ENCODE measurements at regions of chr1 and their contacts with region 1.

Region 1: DNA sequence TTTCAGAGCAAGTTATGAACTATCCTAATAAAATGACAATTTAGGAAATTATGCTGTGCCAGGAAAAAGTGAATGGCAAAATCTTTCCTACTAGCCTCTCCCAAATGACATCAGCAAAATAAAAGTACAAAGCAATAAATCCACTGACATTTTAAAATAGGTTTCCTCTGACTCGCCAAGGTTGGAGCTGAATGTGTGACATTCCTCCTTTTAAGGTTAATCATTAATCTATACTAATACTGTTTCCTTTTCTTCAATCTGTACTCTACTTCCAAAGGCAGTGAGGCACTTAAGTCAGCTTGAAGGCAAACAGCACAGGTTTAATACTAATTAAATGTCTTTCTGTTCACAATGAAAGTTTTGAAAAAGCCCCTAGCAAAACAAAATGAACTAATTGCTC is 15.7 kb downstream of the RNF19B start:
- DNase-seq: peak; percentile 50
- ATAC-seq: peak; percentile 69
- H3K4me3 ChIP-seq: no peak overlapping the region
- H3K27ac ChIP-seq: no peak overlapping the region
- H3K4me1 ChIP-seq: peaks cover 53% of the 10 kb centered on the region
- H3K27me3 ChIP-seq: no peaks in the 10 kb centered on the region
- CTCF ChIP-seq: no peak
- EP300 ChIP-seq: no peak
- POLR2A ChIP-seq: no peak
- RAD21 ChIP-seq: no peak

Region 2: GRCh38 chr1:32964461-32965250 is 15.8 kb after region 1 on chr1 and contains the start of gene RNF19B:
- CTCF ChIA-PET with region 1: no interaction called
- POLR2A ChIA-PET with region 1: interaction called, 20 read pairs
- in situ Hi-C with region 1: no loop called
- intact Hi-C with region 1: no loop called
- DNase-seq: peak; percentile 87
- ATAC-seq: peak; percentile 95
- H3K4me3 ChIP-seq: peak within 1 kb of the TSS; percentile 87 to 97 (median 90)
- H3K27ac ChIP-seq: peak within 1 kb of the TSS; percentile 76
- H3K4me1 ChIP-seq: peaks cover 23% of the 10 kb centered on the region
- H3K27me3 ChIP-seq: peaks cover 0 to 2% of the 10 kb centered on the region in 2 experiments; a peak in 1 of 5 replicates
- CTCF ChIP-seq: peak; percentile 36; the same call in 1 of the 2 replicates
- EP300 ChIP-seq: no peak
- POLR2A ChIP-seq: peak; percentile 95 to 98
- RAD21 ChIP-seq: peak; percentile 64; the same call in 1 of the 2 replicates
- total RNA-seq, gene RNF19B: 15.3 and 16.3 TPM in 2 replicates

Region 3: DNA sequence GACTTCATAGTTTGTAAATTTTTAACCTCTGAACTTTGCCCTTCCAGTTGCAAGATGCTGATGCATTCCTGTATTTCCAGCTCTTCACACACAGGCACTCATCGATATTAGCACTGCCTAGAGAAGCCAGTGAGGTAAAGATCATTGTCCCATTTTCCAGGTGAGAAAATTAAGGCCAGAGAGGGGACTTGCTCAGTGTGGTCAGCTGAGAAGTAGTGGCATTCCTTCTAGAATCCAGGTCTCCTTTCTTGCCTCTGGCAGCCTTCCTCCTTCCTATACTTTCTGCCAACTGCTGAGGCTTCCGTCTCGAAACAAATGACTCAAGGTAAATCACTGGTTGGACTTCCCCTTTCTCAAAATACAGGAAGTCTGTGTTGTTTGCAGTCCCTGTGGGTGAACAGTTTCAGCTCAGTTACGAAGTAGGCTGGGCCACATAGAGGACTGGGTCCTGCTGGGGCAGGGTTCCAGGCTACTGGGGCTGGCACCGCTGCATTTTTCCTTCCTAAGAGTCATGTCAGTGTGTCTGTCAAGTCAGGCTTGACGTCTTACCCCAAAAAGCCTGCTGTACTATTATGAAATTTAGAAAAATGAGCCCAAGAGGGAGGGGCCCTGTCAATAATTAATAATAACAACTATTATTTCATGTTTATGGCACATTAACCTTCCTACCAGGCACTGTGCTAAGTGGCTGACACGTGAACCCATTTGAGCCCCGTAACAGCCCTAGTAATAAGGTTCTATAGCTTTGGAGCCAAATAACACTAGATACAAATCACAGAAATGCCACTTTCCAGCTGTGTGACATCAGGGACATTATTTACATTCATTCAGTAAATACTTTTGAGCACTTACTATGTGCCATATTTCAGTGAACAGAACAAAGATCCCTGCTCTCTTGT is 32.3 kb after region 1 on chr1:
- CTCF ChIA-PET with region 1: no interaction called
- POLR2A ChIA-PET with region 1: no interaction called
- in situ Hi-C with region 1: no loop called
- intact Hi-C with region 1: no loop called
- DNase-seq: no peak
- ATAC-seq: peak; percentile 63
- H3K4me3 ChIP-seq: peak overlapping the region in 1 of 3 experiments; percentile 38; a peak in 1 of 6 replicates
- H3K27ac ChIP-seq: no peak overlapping the region
- H3K4me1 ChIP-seq: peaks cover 12% of the 10 kb centered on the region
- H3K27me3 ChIP-seq: peaks cover 1 to 2% of the 10 kb centered on the region in 2 experiments; a peak in 2 of 5 replicates
- CTCF ChIP-seq: no peak
- EP300 ChIP-seq: no peak
- POLR2A ChIP-seq: no peak
- RAD21 ChIP-seq: no peak